OCI-LY7 (cell line): ENCODE measurements at regions of chr20 and their contacts with region 1.

Region 1: GRCh38 chr20:50690634-50691572 is at the start of gene RIPOR3:
- DNase-seq: no peak
- H3K4me3 ChIP-seq: no peak within 1 kb of the TSS
- H3K27ac ChIP-seq: no peak within 1 kb of the TSS
- H3K4me1 ChIP-seq: no peaks in the 10 kb centered on the region
- CTCF ChIP-seq: no peak
- total RNA-seq, gene RIPOR3: not detected in 2 replicates

Region 2: GRCh38 chr20:50625986-50626677 is 64.8 kb before region 1 on chr20:
- CTCF ChIA-PET with region 1: interaction called, 14 read pairs
- POLR2A ChIA-PET with region 1: no interaction called
- intact Hi-C with region 1: no loop called
- DNase-seq: peak; percentile 61
- H3K4me3 ChIP-seq: no peak overlapping the region
- H3K27ac ChIP-seq: no peak overlapping the region
- H3K4me1 ChIP-seq: peaks cover 36% of the 10 kb centered on the region
- CTCF ChIP-seq: peak; percentile 76